ENCODE measurements at regions of chr17 and their contacts with region 1.

Region 1: DNA sequence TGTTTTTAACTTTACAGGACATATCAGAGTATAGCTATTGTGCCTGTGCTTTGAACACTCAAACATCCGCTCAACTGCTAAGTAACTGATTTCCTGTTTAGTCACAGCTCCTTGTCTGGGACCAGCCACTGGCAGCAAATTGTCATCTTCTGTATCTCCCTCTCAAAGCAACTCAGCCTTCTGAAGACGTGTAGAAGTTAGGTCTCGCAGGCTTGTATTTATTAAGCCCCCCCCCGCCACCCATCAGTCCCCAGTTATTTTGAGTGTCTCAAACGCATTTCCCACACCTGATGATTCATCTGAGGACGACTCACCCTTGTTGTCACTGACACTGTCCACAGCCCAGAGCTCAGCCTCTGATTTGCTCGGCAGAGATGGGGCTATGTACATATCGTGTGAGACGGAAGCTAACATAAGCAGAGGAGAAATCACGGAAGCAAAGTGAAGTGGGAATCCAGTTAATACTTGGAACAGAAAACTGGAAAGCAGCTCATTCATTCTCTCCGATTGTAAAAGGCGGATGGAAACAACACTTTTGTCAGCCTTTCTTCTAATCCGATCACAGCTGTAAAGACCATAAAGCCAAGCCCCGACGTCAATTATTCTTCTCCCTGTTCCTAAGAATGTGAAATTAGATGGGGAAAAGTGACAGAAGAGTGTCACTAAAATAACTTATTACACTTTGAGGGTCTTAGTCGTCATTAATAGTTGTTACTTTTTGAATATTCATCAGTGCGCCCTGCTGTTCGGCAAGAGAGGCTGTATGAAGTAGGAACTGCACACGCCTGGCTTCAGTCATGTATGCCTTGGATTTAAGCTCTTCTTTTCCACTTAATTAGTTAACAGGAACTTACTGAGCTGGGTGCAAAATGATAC is 64.2 kb downstream of the PITPNC1 start:
- DNase-seq: peak; percentile 85
- ATAC-seq: peak; percentile 91
- H3K4me3 Mint-ChIP-seq: peak overlapping the region; percentile 76
- H3K27ac Mint-ChIP-seq: peak overlapping the region; percentile 98
- H3K4me1 Mint-ChIP-seq: peaks cover 80% of the 10 kb centered on the region
- H3K27me3 Mint-ChIP-seq: no peaks in the 10 kb centered on the region

Region 2: DNA sequence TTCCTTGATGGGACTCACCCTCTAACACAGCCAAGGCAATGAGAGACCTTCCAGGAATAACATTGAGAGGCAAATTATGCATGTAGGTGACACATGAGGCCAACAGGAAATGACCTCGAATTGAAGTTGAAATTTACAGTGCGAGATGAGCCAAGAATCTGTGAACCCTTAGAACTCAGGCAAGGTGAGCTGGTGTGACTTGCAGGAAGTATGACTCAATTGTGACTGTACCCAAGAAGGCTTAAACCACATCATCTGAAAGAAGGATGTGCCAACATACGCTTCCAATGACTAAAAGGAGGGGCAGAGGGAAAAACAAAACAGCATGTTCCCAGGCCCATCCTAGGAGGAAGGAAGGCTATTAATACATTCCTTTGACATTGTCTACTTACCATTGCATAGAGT is 19.4 kb before region 1 on chr17:
- CTCF ChIA-PET with region 1: interaction called, 6 read pairs
- POLR2A ChIA-PET with region 1: interaction called, 11 read pairs
- intact Hi-C with region 1: loop called (anchors 1 kb)
- DNase-seq: peak; percentile 70
- ATAC-seq: peak; percentile 96
- H3K4me3 Mint-ChIP-seq: peak overlapping the region; percentile 20
- H3K27ac Mint-ChIP-seq: peak overlapping the region; percentile 88
- H3K4me1 Mint-ChIP-seq: peaks cover 75% of the 10 kb centered on the region
- H3K27me3 Mint-ChIP-seq: no peaks in the 10 kb centered on the region

Region 3: GRCh38 chr17:67452681-67453554 is 11.6 kb after region 1 on chr17:
- CTCF ChIA-PET with region 1: interaction called, 16 read pairs
- POLR2A ChIA-PET with region 1: interaction called, 17 read pairs
- intact Hi-C with region 1: loop called (anchors 1 kb)
- DNase-seq: peak; percentile 64
- ATAC-seq: peak; percentile 85
- H3K4me3 Mint-ChIP-seq: peak overlapping the region; percentile 50
- H3K27ac Mint-ChIP-seq: peak overlapping the region; percentile 93
- H3K4me1 Mint-ChIP-seq: peaks cover 87% of the 10 kb centered on the region
- H3K27me3 Mint-ChIP-seq: no peaks in the 10 kb centered on the region

Region 4: GRCh38 chr17:67469208-67469895 is 28.1 kb after region 1 on chr17:
- CTCF ChIA-PET with region 1: interaction called, 55 read pairs
- POLR2A ChIA-PET with region 1: interaction called, 7 read pairs
- intact Hi-C with region 1: loop called in 1 of 2 experiments (anchors 2 kb)
- DNase-seq: no peak
- ATAC-seq: peak; percentile 42
- H3K4me3 Mint-ChIP-seq: no peak overlapping the region
- H3K27ac Mint-ChIP-seq: peak overlapping the region; percentile 56
- H3K4me1 Mint-ChIP-seq: peaks cover 65% of the 10 kb centered on the region
- H3K27me3 Mint-ChIP-seq: no peaks in the 10 kb centered on the region

Region 5: DNA sequence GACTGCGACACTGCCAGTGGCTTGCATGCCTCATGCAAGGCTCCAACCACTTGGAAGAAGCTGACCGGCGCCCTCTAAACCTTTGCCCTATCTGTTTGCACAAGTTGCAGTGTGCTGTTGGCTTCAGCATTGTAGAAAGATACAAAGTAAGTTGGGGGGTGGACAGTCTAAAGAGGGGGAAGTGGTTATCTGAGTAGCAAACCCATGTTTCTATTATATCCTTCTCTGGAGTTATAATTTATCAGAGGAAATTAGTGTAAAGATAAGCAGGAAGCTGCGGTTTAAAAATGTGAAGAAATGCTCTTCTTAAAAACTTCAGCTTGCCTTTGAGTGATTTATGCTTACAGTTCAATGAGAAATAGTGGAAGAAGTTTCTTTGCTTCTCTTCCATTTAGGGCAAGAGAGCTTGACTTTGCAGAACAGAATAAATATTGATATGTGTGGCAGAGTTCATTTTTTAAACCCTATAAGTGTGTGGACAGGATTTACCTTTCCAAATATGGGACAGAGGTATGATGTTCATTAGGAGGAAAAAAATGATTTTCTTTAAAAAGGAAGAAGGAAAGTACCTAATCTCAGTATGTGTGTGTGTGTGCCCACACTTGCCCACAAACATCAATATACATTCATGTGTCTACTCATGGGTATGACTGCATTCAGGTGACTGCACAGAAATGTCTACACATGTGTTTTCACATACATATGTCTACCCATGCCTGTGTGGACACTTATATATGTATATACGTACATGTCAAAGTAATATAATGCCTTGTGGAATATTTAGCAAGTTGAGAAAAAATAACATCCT is 814.6 kb after region 1 on chr17:
- CTCF ChIA-PET with region 1: no interaction called
- POLR2A ChIA-PET with region 1: no interaction called
- intact Hi-C with region 1: loop called in 1 of 2 experiments (anchors 10 kb)
- DNase-seq: peak; percentile 54
- ATAC-seq: peak; percentile 75
- H3K4me3 Mint-ChIP-seq: no peak overlapping the region
- H3K27ac Mint-ChIP-seq: peak overlapping the region; percentile 65
- H3K4me1 Mint-ChIP-seq: peaks cover 78% of the 10 kb centered on the region
- H3K27me3 Mint-ChIP-seq: no peaks in the 10 kb centered on the region

Measured in activated CD4-positive, alpha-beta T cell treated with anti-CD3 and anti-CD28 coated beads for 36 hours (primary cell).